GM13977 (cell line): ENCODE measurements at regions of chrX and their contacts with region 1.

Region 1: DNA sequence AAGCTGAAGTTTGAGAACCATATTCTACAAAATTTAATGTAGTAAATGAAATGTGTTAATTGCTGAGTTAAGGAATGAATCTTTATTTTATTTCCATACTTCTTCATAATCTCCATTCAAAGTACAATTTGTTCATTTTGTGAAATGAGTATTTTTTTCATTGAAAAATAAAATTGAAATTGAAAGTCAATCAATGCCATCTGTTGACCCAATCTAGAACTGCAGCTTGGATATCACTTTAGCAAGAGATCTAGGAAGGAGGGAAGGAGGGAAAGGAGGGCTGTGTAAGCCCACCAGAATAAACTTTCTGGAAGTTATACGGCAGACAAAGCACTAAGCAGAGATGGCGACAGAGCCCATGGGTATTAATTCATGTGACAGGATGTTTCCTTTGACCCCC is 128.4 kb downstream of the ZMAT1 start:
- DNase-seq: no peak
- CTCF ChIP-seq: peak; percentile 30

Region 2: DNA sequence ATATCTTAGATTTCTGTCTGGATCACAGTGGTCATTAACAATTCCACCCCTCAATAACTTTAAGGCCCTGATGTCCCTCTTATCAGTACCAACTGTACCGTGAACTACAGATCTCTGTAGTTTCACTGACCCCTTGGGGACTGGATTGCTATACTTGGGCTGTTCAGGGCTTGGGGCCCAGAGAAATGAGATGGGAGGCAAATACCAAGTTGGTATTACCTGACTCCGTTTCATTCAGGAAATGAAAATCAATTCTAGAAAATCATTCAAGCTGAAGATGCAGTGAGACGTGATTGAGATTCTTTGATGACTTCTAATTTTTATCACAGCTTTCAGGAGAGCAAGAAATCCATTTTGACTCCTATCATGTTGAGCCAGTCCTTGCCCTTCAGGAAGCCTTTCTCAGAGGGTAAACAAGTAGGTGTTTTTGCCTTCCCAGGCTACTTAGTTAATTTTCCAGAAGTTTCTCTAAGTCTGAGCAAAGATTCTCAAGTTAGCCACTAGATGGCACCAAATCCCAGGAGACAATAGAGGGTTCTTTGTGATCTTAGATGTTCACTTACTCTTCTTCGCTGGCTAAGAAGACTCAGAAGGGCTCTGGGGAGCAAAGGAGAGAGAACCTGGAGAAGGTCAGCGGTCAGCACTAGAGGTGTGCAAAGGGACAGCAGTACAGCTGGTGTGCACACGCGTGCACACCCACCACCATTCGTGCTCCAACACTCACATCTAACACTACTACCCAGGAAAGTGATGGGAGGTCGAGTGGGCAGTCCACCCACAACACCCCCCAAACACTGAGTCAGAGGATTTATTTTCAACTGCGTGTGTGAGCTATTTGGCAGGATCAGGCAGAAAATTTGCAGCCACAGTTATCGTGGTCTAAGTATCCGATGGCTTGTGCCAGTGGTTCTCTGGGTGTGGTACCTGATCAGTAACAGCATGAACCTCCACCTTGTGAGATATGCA is 388.0 kb before region 1 on chrX:
- in situ Hi-C with region 1: loop called (anchors 10 kb)
- DNase-seq: peak; percentile 78
- CTCF ChIP-seq: peak; percentile 65